ENCODE measurements at regions of chr21 and their contacts with region 1.

Region 1: DNA sequence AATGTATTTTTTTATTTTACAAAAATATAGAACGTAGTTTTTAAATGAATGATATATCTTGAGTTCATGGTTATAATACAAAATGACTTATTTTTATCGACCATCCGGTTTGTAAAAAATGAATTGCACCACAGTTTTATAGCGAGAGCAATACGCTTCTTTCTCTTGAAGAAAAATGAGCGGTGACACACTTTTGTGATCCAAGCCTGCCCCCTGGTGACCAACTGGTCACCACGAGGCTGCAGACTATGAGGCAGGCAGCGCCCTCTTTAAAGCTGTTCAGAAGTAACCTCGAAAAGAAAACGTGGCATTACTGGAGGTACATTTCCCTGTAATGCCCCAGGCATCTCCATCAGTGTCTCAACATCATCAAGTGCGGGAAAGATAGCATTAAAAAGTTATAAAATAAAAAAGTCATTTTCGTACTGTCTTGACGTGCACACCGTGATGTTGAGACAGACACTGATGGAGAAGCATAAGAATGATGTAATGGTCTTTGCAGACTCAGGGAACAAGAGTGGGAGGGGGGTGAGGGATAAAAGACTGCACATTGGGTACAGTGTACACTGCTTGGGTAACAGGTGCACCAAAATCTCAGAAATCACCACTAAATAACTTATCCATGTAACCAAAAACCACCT is 734.2 kb upstream of the ADAMTS5 start:
- DNase-seq: peak; percentile 88
- H3K4me3 ChIP-seq: no peak overlapping the region
- H3K27ac ChIP-seq: no peak overlapping the region
- H3K4me1 ChIP-seq: peaks cover 0 to 16% (median 1%) of the 10 kb centered on the region in 4 donors
- H3K27me3 ChIP-seq: no peaks in the 10 kb centered on the region
- CTCF ChIP-seq: peak; percentile 77 to 86 (median 79)
- EP300 ChIP-seq: no peak
- POLR2A ChIP-seq: no peak

Region 2: DNA sequence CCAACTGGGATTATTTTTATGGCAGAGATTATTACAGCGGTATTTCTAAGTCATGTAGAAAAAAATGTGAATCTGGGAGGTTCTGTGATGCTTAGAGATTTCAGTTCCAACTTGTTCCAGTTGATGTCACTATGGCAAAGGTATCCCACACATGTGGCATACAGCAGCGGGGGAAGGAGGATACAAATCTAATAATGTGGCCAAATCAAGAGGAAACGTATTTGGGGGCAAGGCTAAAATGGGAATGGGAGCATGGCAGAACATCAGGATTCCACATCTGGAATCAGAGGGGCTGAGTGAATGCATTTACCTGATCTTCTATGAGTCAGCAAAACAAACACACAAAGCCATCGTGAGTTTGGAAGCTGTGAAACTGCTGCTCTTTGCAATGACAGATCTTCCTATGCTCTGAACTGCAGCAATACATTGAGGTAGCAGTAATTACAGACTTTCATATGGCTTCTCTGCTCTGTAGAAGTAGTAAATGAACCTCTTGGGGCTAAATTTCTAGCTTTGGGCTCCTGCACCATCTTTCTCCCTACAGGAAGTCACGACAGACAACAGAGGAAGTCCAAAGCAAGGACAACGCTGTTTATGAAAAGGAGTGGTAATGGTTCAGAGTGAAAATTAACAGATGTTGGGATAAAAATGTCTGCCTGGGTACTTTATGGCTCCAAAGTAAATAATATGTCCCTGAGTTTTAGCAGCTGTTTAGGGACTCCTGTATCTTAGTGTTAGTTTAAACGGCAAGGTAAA is 1910.8 kb before region 1 on chr21:
- in situ Hi-C with region 1: no loop called
- intact Hi-C with region 1: loop called (anchors 5 kb)
- DNase-seq: no peak
- H3K4me3 ChIP-seq: peak overlapping the region in 3 of 4 donors; percentile 19 to 42 (median 30)
- H3K27ac ChIP-seq: peak overlapping the region; percentile 59 to 75 (median 70)
- H3K4me1 ChIP-seq: peaks cover 0 to 13% (median 0%) of the 10 kb centered on the region in 4 donors
- H3K27me3 ChIP-seq: no peaks in the 10 kb centered on the region
- CTCF ChIP-seq: peak; percentile 31 to 39 (median 36)
- EP300 ChIP-seq: no peak
- POLR2A ChIP-seq: no peak

Region 3: DNA sequence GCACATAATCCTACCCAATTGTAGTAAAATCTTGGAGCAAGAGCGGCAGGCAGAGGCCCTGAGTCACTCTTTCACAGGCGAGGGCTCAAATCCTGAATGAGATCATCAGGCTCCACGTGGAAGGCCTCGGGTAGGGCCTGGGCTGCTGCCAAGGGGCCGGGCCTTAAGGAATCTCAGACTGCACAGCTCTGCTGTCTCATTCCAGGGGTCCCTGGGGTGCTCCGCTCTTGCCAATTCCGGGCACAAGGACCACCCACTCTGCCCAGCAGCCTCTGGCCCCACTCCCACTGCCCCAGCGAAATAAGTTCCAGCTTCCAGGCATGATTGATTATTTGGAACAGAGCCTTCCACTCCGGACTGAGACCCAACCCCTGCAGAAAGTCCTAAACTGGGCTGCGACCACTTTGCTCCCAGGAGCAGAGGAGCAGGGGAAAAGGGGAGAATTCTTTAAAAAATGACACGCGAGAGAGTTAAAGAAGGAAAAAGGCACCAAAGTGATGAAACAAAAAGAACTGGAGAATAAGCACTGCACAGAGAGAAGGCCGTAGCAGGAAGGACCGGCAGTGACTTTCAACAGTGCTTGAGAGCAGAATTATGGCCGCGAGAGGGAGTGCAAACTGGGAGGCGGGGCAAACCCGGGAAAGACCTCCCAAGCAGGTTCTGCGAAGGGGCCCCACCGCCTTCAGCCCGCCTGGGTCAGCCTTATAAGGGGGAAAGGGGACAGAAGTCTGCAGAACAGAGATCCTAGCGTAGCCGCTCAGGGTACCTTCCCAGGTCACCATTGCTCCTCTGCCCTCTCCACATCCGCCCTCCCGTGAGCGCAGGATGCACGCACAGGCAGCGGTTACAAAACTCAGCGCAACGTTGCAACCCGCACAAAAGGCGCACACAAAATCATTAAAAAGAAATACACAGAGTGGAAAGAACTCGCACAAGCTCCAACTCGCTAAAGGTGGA is 857.8 kb before region 1 on chr21:
- in situ Hi-C with region 1: loop called in 2 of 4 experiments (anchors 5 kb)
- intact Hi-C with region 1: loop called (anchors 2 kb)
- DNase-seq: peak; percentile 87
- H3K4me3 ChIP-seq: peak overlapping the region; percentile 37 to 67 (median 57)
- H3K27ac ChIP-seq: peak overlapping the region; percentile 81 to 94 (median 92)
- H3K4me1 ChIP-seq: peaks cover 0 to 49% (median 37%) of the 10 kb centered on the region in 4 donors
- H3K27me3 ChIP-seq: peaks cover 60% of the 10 kb centered on the region
- CTCF ChIP-seq: peak in 4 of 5 experiments; percentile 15 to 25 (median 20)
- EP300 ChIP-seq: no peak
- POLR2A ChIP-seq: no peak

Region 4: DNA sequence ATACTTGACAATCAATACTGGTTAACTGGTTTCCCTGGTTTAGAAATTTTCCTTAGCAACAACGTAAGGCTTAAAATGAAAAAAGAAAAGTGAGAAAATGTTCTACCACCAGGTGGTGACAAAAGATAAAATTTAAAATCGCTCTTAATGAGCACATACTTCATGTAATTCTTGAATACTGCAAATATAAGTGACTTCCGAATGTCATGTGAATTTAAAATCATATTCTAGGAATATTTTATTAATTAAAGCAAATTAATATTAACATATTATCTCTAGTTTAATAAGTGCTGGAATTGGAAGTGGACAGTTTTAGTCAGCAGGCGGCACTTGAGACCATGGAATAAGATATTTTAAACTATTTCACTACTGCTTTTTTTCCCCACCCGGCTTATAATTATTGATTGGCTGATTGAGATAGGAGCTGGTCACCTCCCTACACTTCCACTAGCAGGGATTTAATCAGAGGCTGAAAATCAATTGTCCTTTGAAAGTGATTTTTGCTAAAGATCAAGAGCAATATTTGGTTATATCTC is 850.9 kb before region 1 on chr21:
- in situ Hi-C with region 1: loop called (anchors 5 to 10 kb)
- intact Hi-C with region 1: loop called (anchors 2 kb)
- DNase-seq: no peak
- H3K4me3 ChIP-seq: no peak overlapping the region
- H3K27ac ChIP-seq: no peak overlapping the region
- H3K4me1 ChIP-seq: peaks cover 0 to 28% (median 14%) of the 10 kb centered on the region in 4 donors
- H3K27me3 ChIP-seq: peaks cover 41% of the 10 kb centered on the region
- CTCF ChIP-seq: peak; percentile 59 to 94 (median 73)
- EP300 ChIP-seq: no peak
- POLR2A ChIP-seq: no peak

Region 5: GRCh38 chr21:27802816-27803475 is 101.9 kb after region 1 on chr21:
- in situ Hi-C with region 1: no loop called
- intact Hi-C with region 1: no loop called
- DNase-seq: peak; percentile 39
- H3K4me3 ChIP-seq: no peak overlapping the region
- H3K27ac ChIP-seq: no peak overlapping the region
- H3K4me1 ChIP-seq: peaks cover 0 to 9% (median 0%) of the 10 kb centered on the region in 4 donors
- H3K27me3 ChIP-seq: no peaks in the 10 kb centered on the region
- CTCF ChIP-seq: peak; percentile 46 to 62 (median 52)
- EP300 ChIP-seq: no peak
- POLR2A ChIP-seq: no peak

Region 6: DNA sequence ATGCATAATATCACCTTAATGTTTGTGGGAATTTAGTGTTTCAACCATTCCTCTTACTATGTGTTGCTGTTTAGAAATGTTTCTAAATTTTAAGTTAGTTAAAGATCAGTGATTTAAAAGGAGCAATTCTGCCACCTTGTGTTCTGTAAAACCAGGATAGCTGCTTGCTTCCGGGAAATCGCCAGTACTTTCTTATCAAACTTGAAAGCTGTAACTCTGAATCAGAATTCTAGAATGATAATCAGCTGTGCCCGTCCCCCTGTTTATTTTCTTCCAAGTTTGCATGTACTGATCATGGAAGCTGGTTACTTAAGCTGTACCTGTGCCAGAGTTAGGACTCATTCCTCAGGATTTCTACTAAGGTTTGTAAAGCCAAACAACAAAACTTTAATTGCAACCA is 635.2 kb after region 1 on chr21:
- in situ Hi-C with region 1: loop called in 1 of 4 experiments (anchors 10 kb)
- intact Hi-C with region 1: no loop called
- DNase-seq: no peak
- H3K4me3 ChIP-seq: no peak overlapping the region
- H3K27ac ChIP-seq: no peak overlapping the region
- H3K4me1 ChIP-seq: peaks cover 0 to 10% (median 0%) of the 10 kb centered on the region in 4 donors
- H3K27me3 ChIP-seq: no peaks in the 10 kb centered on the region
- CTCF ChIP-seq: peak; percentile 11 to 37 (median 22)
- EP300 ChIP-seq: no peak
- POLR2A ChIP-seq: no peak

Region 7: GRCh38 chr21:28579986-28580550 is 879.0 kb after region 1 on chr21:
- in situ Hi-C with region 1: no loop called
- intact Hi-C with region 1: loop called (anchors 5 kb)
- DNase-seq: no peak
- H3K4me3 ChIP-seq: no peak overlapping the region
- H3K27ac ChIP-seq: no peak overlapping the region
- H3K4me1 ChIP-seq: no peaks in the 10 kb centered on the region
- H3K27me3 ChIP-seq: no peaks in the 10 kb centered on the region
- CTCF ChIP-seq: no peak
- EP300 ChIP-seq: no peak
- POLR2A ChIP-seq: no peak

Region 8: DNA sequence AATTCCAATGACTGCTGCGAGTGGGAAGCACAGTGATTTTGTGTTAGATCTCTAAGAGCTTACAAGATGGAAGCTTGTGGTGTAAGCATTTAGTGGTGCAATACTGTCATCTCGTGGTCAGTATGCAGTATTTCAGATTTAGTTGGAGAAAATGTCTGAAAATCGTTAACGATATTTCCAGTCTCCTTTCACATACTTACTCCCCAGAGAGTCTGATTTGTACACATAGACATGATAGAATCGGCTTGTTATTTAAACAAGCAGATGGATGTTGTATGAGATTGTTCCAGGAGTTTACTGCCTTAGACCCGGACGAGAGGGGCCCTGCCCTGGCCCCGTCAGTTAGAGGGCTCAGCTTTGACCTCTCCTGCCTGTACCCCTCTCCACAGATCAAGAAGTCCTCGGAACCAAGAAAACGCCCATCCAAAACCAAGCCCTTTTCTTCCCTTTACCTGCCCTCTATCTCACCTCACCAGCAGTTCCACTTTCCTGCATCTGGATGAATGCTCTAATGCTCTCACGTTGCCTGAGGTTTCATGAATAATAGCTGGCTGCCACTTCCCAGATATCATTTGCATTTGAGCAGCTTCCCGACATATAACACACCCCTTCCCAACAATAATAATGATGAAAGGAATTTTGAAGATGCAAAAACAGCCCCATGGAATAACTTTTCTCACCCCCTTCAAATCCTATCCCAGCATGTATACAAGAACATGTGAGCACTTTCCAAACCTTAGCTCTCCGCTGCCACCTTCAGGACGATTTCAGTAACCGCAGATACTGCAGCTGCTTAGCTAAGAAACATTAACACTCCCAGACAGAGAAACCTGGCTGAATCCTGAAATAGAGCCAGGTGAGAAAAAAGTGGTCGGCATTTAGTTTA is 1044.3 kb after region 1 on chr21:
- in situ Hi-C with region 1: loop called in 2 of 4 experiments (anchors 10 to 25 kb)
- intact Hi-C with region 1: no loop called
- DNase-seq: peak; percentile 78
- H3K4me3 ChIP-seq: peak overlapping the region; percentile 17 to 58 (median 36)
- H3K27ac ChIP-seq: peak overlapping the region; percentile 48 to 70 (median 62)
- H3K4me1 ChIP-seq: peaks cover 0 to 9% (median 2%) of the 10 kb centered on the region in 4 donors
- H3K27me3 ChIP-seq: no peaks in the 10 kb centered on the region
- CTCF ChIP-seq: peak; percentile 88 to 99 (median 93)
- EP300 ChIP-seq: no peak
- POLR2A ChIP-seq: no peak

Measured in transverse colon (tissue), 4 donors.